ENCODE measurements at regions of chr7 and their contacts with region 1.

Region 1: GRCh38 chr7:28926871-28927597 is 31.1 kb downstream of the TRIL start:
- DNase-seq: peak; percentile 70 to 74
- H3K4me3 ChIP-seq: peak overlapping the region; percentile 61
- H3K4me3 Mint-ChIP-seq: peak overlapping the region; percentile 80
- H3K27ac Mint-ChIP-seq: peak overlapping the region; percentile 32
- H3K4me1 ChIP-seq: peaks cover 5% of the 10 kb centered on the region
- H3K4me1 Mint-ChIP-seq: peaks cover 17% of the 10 kb centered on the region
- H3K27me3 ChIP-seq: no peaks in the 10 kb centered on the region; the same call in 1 of the 2 replicates
- H3K27me3 Mint-ChIP-seq: no peaks in the 10 kb centered on the region
- CTCF ChIP-seq: peak; percentile 76 to 79

Region 2: DNA sequence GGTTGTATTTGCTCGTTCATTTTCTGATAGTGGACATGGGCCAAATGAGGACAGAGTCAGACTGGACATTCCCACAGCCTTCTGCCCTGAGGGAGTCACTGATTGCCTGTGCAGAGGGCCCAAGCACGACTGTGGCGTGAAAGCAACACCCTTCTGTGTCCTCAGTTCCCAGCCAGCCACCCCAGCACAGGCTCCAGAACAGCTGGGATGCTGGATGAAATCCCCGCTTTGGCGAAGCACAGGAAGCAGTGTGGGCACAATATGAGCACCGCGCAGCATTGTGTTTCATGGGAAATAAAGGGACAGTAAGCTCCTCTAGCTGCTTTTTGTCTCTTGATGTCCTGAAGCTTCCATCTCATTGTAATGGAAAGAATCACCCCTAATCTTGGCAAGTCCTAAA is 10.6 kb after region 1 on chr7:
- CTCF ChIA-PET with region 1: interaction called, 12 read pairs
- POLR2A ChIA-PET with region 1: no interaction called
- intact Hi-C with region 1: no loop called
- DNase-seq: no peak
- H3K4me3 ChIP-seq: no peak overlapping the region
- H3K4me3 Mint-ChIP-seq: no peak overlapping the region
- H3K27ac Mint-ChIP-seq: no peak overlapping the region
- H3K4me1 ChIP-seq: peaks cover 51% of the 10 kb centered on the region
- H3K4me1 Mint-ChIP-seq: peaks cover 18% of the 10 kb centered on the region
- H3K27me3 ChIP-seq: no peaks in the 10 kb centered on the region
- H3K27me3 Mint-ChIP-seq: no peaks in the 10 kb centered on the region
- CTCF ChIP-seq: no peak

Region 3: GRCh38 chr7:29105752-29106668 is 179.0 kb after region 1 on chr7:
- CTCF ChIA-PET with region 1: interaction called, 68 read pairs
- POLR2A ChIA-PET with region 1: no interaction called
- intact Hi-C with region 1: loop called (anchors 1 kb)
- DNase-seq: peak; percentile 59 to 79
- H3K4me3 ChIP-seq: no peak overlapping the region
- H3K4me3 Mint-ChIP-seq: no peak overlapping the region
- H3K27ac Mint-ChIP-seq: peak overlapping the region; percentile 50
- H3K4me1 ChIP-seq: peaks cover 33% of the 10 kb centered on the region
- H3K4me1 Mint-ChIP-seq: peaks cover 47% of the 10 kb centered on the region
- H3K27me3 ChIP-seq: no peaks in the 10 kb centered on the region
- H3K27me3 Mint-ChIP-seq: no peaks in the 10 kb centered on the region
- CTCF ChIP-seq: peak; percentile 85 to 88

Region 4: GRCh38 chr7:29189743-29190201 is 262.7 kb after region 1 on chr7:
- CTCF ChIA-PET with region 1: interaction called, 23 read pairs
- POLR2A ChIA-PET with region 1: no interaction called
- intact Hi-C with region 1: loop called (anchors 2 kb)
- DNase-seq: peak; percentile 87 to 88
- H3K4me3 ChIP-seq: no peak overlapping the region
- H3K4me3 Mint-ChIP-seq: peak overlapping the region; percentile 60
- H3K27ac Mint-ChIP-seq: peak overlapping the region; percentile 18
- H3K4me1 ChIP-seq: peaks cover 26% of the 10 kb centered on the region
- H3K4me1 Mint-ChIP-seq: peaks cover 19% of the 10 kb centered on the region
- H3K27me3 ChIP-seq: no peaks in the 10 kb centered on the region
- H3K27me3 Mint-ChIP-seq: no peaks in the 10 kb centered on the region
- CTCF ChIP-seq: peak; percentile 91 to 96

Region 5: GRCh38 chr7:29408841-29409243 is 481.8 kb after region 1 on chr7:
- CTCF ChIA-PET with region 1: interaction called, 19 read pairs
- POLR2A ChIA-PET with region 1: no interaction called
- intact Hi-C with region 1: loop called (anchors 1 kb)
- DNase-seq: peak in 1 of 2 experiments; percentile 76
- H3K4me3 ChIP-seq: no peak overlapping the region
- H3K4me3 Mint-ChIP-seq: no peak overlapping the region
- H3K27ac Mint-ChIP-seq: no peak overlapping the region
- H3K4me1 ChIP-seq: peaks cover 23% of the 10 kb centered on the region
- H3K4me1 Mint-ChIP-seq: peaks cover 22% of the 10 kb centered on the region
- H3K27me3 ChIP-seq: no peaks in the 10 kb centered on the region
- H3K27me3 Mint-ChIP-seq: no peaks in the 10 kb centered on the region
- CTCF ChIP-seq: peak; percentile 74 to 86

Measured in Caco-2 (cell line).